Activated naive CD4-positive, alpha-beta T cell treated with anti-CD3 and anti-CD28 coated beads for 36 hours (primary cell): ENCODE measurements at regions of chr22 and their contacts with region 1.

Region 1: DNA sequence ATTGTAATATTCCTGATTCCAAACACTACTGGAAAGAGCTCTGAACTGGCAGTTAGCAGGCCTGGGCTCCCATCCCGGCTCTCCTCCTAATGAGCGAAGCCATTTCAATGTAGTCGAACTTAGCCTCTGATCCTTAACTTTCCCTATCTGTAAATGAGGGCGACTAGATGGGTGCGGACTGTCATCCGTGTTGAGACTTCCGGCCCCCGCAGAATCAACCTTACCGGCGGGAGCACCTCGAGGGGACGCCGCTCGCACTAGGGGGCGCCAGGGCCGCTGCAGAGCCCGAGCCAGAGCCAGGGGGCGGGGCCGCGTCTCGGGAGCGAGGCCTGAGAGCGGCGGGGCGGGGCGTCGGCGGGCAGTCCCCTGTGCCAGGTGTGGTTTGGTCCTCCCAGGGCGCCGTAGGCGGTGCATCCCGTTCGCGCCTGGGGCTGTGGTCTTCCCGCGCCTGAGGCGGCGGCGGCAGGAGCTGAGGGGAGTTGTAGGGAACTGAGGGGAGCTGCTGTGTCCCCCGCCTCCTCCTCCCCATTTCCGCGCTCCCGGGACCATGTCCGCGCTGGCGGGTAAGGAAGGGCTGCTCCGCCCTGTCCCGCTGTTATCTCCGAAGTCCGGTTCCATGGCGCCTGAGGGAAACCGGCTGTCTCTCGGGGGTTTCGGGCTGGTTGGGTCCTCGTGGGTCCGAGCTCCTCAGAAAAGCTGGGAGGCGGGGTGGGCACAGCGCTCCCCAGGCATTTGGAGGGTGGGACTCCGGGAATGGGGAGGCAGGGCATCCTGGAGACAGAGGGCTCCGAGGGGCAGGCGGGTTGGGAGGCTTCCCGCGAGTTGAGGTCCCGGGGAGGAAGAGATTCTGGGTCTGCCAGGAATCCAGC is at the start of gene LIMK2:
- DNase-seq: peak; percentile 98
- H3K4me3 Mint-ChIP-seq: peak within 1 kb of the TSS; percentile 82
- H3K27ac Mint-ChIP-seq: peak within 1 kb of the TSS; percentile 79
- H3K4me1 Mint-ChIP-seq: peaks cover 41% of the 10 kb centered on the region
- H3K27me3 Mint-ChIP-seq: no peaks in the 10 kb centered on the region
- total RNA-seq, gene LIMK2: 50.8 to 50.9 TPM

Region 2: GRCh38 chr22:30556388-30556787 is 655.7 kb before region 1 on chr22:
- CTCF ChIA-PET with region 1: no interaction called
- intact Hi-C with region 1: no loop called
- DNase-seq: no peak
- H3K4me3 Mint-ChIP-seq: no peak overlapping the region
- H3K27ac Mint-ChIP-seq: no peak overlapping the region
- H3K4me1 Mint-ChIP-seq: no peaks in the 10 kb centered on the region
- H3K27me3 Mint-ChIP-seq: no peaks in the 10 kb centered on the region

Region 3: GRCh38 chr22:31080848-31081649 is 131.0 kb before region 1 on chr22 and contains the start of gene SMTN:
- CTCF ChIA-PET with region 1: interaction called, 4 read pairs
- intact Hi-C with region 1: loop called (anchors 1 kb)
- DNase-seq: peak; percentile 91
- H3K4me3 Mint-ChIP-seq: peak within 1 kb of the TSS; percentile 79
- H3K27ac Mint-ChIP-seq: peak within 1 kb of the TSS; percentile 18
- H3K4me1 Mint-ChIP-seq: peaks cover 32% of the 10 kb centered on the region
- H3K27me3 Mint-ChIP-seq: no peaks in the 10 kb centered on the region
- total RNA-seq, gene SMTN: 46.2 to 47.6 TPM

Region 4: GRCh38 chr22:31173386-31174145 is 38.5 kb before region 1 on chr22:
- CTCF ChIA-PET with region 1: no interaction called
- intact Hi-C with region 1: loop called (anchors 1 kb)
- DNase-seq: no peak
- H3K4me3 Mint-ChIP-seq: peak overlapping the region; percentile 23
- H3K27ac Mint-ChIP-seq: peak overlapping the region; percentile 84
- H3K4me1 Mint-ChIP-seq: peaks cover 47% of the 10 kb centered on the region
- H3K27me3 Mint-ChIP-seq: no peaks in the 10 kb centered on the region

Region 5: DNA sequence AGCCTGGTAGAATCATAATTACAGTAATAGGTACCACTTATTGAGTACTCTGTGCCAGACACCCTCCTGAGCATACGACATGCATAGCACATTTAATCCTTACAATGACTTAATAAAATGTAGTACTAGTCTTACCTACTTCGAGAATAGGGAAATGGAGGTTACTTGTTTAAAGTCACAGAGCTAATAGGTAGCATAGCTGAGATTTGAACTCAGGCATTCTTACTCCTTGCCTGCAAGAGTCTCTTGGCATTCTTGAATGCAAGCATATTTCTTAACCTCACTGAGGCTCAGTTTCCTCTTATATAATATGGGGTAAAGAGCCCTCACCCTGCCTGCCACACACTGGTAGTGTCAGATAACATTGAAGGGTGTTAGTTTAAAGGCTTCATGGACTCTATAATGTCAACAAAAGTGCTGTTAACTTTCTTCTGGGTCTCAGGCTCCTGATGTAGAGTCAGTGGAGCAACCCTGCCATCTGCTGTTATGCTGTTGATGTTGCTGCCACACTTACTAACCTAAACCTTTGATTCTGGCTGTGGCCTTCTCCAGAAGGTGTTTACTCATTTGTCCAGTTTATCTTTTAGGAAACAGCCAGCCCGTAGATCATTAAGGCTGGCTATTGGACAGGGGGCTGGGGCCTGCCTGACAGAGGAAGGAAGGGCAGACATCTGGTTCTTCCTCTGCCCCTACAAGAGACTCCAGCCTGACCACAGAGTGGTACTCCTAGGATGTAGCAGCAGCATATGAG is 18.9 kb after region 1 on chr22:
- CTCF ChIA-PET with region 1: interaction called, 10 read pairs
- intact Hi-C with region 1: loop called (anchors 1 kb)
- DNase-seq: peak; percentile 60
- H3K4me3 Mint-ChIP-seq: no peak overlapping the region
- H3K27ac Mint-ChIP-seq: no peak overlapping the region
- H3K4me1 Mint-ChIP-seq: peaks cover 28% of the 10 kb centered on the region
- H3K27me3 Mint-ChIP-seq: no peaks in the 10 kb centered on the region

Region 6: GRCh38 chr22:31278622-31279326 is 66.7 kb after region 1 on chr22:
- CTCF ChIA-PET with region 1: interaction called, 59 read pairs
- intact Hi-C with region 1: loop called (anchors 2 kb)
- DNase-seq: peak; percentile 69
- H3K4me3 Mint-ChIP-seq: peak overlapping the region; percentile 18
- H3K27ac Mint-ChIP-seq: peak overlapping the region; percentile 94
- H3K4me1 Mint-ChIP-seq: peaks cover 86% of the 10 kb centered on the region
- H3K27me3 Mint-ChIP-seq: no peaks in the 10 kb centered on the region

Region 7: DNA sequence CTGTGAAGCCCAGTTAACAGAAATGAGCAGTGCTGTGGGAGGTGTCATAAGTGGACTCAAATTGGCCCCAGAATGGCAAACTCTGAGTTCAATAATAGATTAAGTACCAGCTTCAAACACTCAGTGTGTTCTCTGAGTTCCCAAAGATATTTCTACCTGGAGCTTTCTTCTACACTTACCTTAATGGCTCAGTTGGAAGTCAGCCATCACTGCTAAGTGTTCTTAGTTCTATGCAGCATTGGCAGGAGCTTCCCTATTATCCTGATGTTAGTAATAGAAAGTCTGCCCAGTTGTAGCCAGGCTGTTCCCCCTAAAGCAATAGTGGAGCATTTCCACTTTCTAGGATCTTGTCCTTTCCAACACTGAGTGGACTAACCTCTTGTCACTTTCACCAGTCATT is 89.9 kb after region 1 on chr22:
- CTCF ChIA-PET with region 1: no interaction called
- intact Hi-C with region 1: no loop called
- DNase-seq: no peak
- H3K4me3 Mint-ChIP-seq: no peak overlapping the region
- H3K27ac Mint-ChIP-seq: no peak overlapping the region
- H3K4me1 Mint-ChIP-seq: peaks cover 32% of the 10 kb centered on the region
- H3K27me3 Mint-ChIP-seq: no peaks in the 10 kb centered on the region

Region 8: GRCh38 chr22:31345331-31346254 is 133.5 kb after region 1 on chr22:
- CTCF ChIA-PET with region 1: no interaction called
- intact Hi-C with region 1: loop called (anchors 1 kb)
- DNase-seq: peak; percentile 86
- H3K4me3 Mint-ChIP-seq: peak overlapping the region; percentile 90
- H3K27ac Mint-ChIP-seq: peak overlapping the region; percentile 94
- H3K4me1 Mint-ChIP-seq: peaks cover 42% of the 10 kb centered on the region
- H3K27me3 Mint-ChIP-seq: no peaks in the 10 kb centered on the region

Region 9: DNA sequence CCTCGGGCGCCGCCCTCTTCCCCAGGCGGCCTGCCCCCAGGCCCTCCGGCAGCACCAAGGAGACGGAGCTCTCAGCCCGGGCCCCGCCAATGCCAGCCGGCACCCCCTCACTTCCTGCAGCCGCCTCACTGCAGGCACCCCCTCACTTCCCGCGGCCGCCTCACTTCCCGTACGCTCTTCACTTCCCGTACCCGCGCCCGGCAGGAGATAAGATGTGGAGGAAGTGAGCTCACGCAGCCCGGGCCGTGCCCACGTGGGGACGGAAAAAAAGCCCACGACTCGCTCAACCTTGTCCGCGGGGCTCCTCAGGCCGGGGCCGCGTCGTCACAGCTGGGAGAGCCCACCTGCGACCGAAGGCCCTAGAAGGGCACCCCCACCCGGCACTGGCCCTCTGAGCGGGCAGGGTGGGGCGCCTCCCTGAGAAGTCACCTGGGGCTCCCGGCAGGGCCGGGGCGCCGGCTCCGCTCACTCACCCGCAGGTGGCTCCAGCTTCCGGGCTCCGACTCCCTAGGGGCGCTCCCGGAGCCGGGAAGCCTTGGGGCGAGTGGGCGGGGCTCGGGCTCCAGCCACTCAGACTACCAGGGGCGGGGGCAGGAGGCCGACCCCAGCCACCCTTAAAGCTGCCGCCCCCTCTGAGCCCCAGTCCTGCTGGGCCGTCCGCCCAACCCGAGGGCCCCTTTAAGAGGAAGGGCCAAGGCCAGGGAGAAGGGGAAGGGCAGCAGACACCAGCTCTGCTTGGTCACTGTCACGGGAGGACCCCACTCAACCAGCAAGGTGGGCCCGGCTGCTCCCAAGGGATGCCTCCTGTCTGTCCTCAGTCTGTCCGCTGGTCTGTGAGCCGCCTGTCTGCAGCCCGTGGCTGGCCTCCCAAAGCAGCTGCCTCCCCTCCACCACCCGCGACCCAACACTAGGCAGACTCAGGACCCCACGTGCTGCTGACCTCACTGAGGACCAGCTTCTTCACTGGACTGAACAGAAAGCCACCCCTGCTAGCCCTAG is 418.5 kb after region 1 on chr22:
- CTCF ChIA-PET with region 1: interaction called, 4 read pairs
- intact Hi-C with region 1: loop called (anchors 2 kb)
- DNase-seq: peak; percentile 91
- H3K4me3 Mint-ChIP-seq: peak overlapping the region; percentile 84
- H3K27ac Mint-ChIP-seq: peak overlapping the region; percentile 94
- H3K4me1 Mint-ChIP-seq: peaks cover 56% of the 10 kb centered on the region
- H3K27me3 Mint-ChIP-seq: no peaks in the 10 kb centered on the region